ENCODE measurements at regions of chr10 and their contacts with region 1.

Region 1: DNA sequence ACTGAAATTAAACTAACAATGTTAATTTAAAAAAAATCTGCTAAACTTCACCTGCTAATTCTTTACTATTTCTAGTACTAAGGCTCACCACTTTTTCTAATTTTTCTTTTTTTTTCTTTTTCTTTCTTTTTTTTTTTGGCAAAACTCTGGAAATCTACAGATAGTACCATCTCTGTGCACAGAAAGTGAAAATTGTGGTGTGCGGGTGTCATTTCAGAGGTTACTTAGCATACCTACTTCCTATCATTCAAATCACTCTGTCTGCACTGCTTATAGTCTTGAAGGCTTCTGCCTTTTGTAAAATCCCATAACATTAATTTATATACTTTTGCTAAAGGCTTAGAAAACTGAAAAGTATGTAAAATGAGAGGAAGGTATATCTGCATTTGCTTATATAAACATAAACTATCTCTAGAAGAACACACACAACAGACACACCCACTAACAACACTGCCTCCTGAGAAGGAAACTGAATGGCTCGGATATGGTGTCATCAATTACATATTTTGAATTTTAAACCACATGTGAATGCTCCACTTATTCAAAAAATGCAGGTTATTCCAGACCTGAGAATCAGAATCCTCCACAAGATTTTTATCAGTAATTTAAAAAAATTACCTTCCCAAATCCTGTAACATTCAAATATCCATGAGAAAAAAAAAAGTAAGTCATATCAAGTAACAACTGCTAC is 229.5 kb downstream of the PARD3 start:
- DNase-seq: no peak
- ATAC-seq: no peak
- H3K4me3 ChIP-seq: no peak overlapping the region
- H3K27ac ChIP-seq: no peak overlapping the region
- H3K4me1 ChIP-seq: no peaks in the 10 kb centered on the region
- H3K27me3 ChIP-seq: no peaks in the 10 kb centered on the region
- CTCF ChIP-seq: no peak
- EP300 ChIP-seq: no peak
- POLR2A ChIP-seq: no peak
- RAD21 ChIP-seq: no peak

Region 2: GRCh38 chr10:34494012-34494411 is 91.6 kb before region 1 on chr10:
- CTCF ChIA-PET with region 1: no interaction called
- POLR2A ChIA-PET with region 1: no interaction called
- in situ Hi-C with region 1: no loop called
- intact Hi-C with region 1: loop called (anchors 1 kb)
- DNase-seq: no peak
- ATAC-seq: no peak
- H3K4me3 ChIP-seq: no peak overlapping the region
- H3K27ac ChIP-seq: no peak overlapping the region
- H3K4me1 ChIP-seq: no peaks in the 10 kb centered on the region
- H3K27me3 ChIP-seq: no peaks in the 10 kb centered on the region
- CTCF ChIP-seq: no peak
- EP300 ChIP-seq: no peak
- POLR2A ChIP-seq: no peak
- RAD21 ChIP-seq: no peak